PC-3 (cell line): ENCODE measurements at regions of chr13 and their contacts with region 1.

Region 1: DNA sequence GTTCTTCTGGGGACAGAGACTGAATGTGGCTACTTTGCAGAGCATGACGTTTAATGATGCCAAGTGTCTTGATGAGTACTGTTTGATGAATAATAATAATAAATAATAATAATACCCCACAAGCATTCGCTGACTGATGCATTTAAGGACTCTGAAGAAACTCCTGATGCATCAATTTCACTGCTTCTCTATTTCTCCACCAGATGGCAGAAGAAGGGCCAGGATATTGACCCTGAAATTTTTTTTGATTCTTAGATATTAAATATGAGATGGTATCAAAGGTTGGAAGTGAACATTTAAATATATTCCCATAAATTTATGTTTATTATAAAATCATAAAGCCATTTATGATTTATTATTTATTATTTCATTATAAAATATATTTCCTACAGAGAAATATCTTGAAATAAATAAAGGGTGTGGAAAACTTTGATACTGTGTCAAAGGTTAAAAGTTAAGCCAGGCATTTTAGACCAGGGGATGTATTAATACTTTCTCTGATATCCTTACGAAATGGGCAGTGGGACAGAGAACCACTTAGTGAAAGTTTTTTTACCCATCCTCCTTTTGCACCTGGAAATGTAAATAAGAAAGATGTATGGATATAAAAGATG is 170.9 kb downstream of the LACC1 start:
- DNase-seq: peak; percentile 62
- ATAC-seq: no peak
- H3K4me3 ChIP-seq: no peak overlapping the region
- H3K27ac ChIP-seq: peak overlapping the region; percentile 67
- H3K4me1 ChIP-seq: peaks cover 26% of the 10 kb centered on the region
- H3K27me3 ChIP-seq: no peaks in the 10 kb centered on the region
- CTCF ChIP-seq: peak; percentile 61

Region 2: GRCh38 chr13:43905435-43906031 is 145.0 kb before region 1 on chr13:
- CTCF ChIA-PET with region 1: interaction called, 26 read pairs
- POLR2A ChIA-PET with region 1: no interaction called
- intact Hi-C with region 1: loop called (anchors 1 kb)
- DNase-seq: peak; percentile 80
- ATAC-seq: peak; percentile 59
- H3K4me3 ChIP-seq: no peak overlapping the region
- H3K27ac ChIP-seq: no peak overlapping the region
- H3K4me1 ChIP-seq: peaks cover 20% of the 10 kb centered on the region
- H3K27me3 ChIP-seq: no peaks in the 10 kb centered on the region
- CTCF ChIP-seq: peak; percentile 76

Region 3: DNA sequence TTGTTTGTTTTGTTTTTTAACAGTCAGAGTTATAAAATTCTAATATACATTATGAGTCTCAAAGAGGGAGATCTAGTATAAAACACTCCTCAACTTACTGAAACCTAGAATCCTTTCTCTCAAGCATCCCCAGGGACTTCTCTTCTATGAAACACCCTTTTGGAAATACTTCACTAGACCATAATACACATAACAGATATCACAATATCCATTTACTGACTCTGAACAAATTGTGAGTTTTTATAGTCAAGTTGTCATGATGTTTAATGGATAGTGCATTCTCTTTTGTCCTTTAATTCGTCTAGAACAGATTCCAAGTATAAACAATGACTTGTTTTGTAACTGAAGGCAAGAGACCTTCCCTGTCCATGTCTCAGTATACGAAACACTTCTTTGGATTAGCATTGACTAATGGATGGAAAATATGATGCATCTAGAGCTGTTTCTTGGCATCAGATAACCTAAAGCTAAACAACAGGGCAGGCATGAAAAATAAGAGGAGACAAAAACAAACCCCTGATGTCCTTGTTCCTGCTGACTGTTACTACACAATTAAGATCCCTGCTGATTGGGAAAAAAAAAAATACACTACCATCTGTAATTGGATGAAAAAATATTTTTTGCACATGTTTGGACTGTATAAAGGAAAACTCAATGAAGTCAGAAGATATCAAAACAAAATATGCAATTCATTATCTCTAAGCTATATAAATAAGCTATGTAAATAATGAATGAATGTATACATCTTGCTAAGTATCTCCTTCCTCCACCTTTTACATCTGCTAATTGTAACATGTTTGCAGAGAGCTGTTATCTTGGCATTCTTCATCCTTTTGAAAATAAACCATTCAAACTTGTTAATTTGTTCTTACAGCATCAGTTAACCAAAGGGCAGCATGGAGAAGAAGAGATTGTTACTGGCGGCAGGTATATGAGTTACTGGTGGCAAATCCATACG is 43.3 kb after region 1 on chr13:
- CTCF ChIA-PET with region 1: no interaction called
- POLR2A ChIA-PET with region 1: interaction called, 11 read pairs
- intact Hi-C with region 1: no loop called
- DNase-seq: no peak
- ATAC-seq: no peak
- H3K4me3 ChIP-seq: no peak overlapping the region
- H3K27ac ChIP-seq: no peak overlapping the region
- H3K4me1 ChIP-seq: no peaks in the 10 kb centered on the region
- H3K27me3 ChIP-seq: no peaks in the 10 kb centered on the region
- CTCF ChIP-seq: no peak

Region 4: GRCh38 chr13:44141725-44142539 is 91.4 kb after region 1 on chr13:
- CTCF ChIA-PET with region 1: no interaction called
- POLR2A ChIA-PET with region 1: no interaction called
- intact Hi-C with region 1: loop called (anchors 5 kb)
- DNase-seq: peak; percentile 93
- ATAC-seq: peak; percentile 95
- H3K4me3 ChIP-seq: peak overlapping the region; percentile 75
- H3K27ac ChIP-seq: peak overlapping the region; percentile 84
- H3K4me1 ChIP-seq: peaks cover 29% of the 10 kb centered on the region
- H3K27me3 ChIP-seq: no peaks in the 10 kb centered on the region
- CTCF ChIP-seq: no peak

Region 5: GRCh38 chr13:44312898-44313551 is 262.5 kb after region 1 on chr13:
- CTCF ChIA-PET with region 1: no interaction called
- POLR2A ChIA-PET with region 1: no interaction called
- intact Hi-C with region 1: loop called (anchors 2 kb)
- DNase-seq: peak; percentile 91
- ATAC-seq: peak; percentile 60
- H3K4me3 ChIP-seq: peak overlapping the region; percentile 43; the same call in 1 of the 2 replicates
- H3K27ac ChIP-seq: peak overlapping the region; percentile 100
- H3K4me1 ChIP-seq: peaks cover 72% of the 10 kb centered on the region
- H3K27me3 ChIP-seq: no peaks in the 10 kb centered on the region
- CTCF ChIP-seq: no peak

Region 6: DNA sequence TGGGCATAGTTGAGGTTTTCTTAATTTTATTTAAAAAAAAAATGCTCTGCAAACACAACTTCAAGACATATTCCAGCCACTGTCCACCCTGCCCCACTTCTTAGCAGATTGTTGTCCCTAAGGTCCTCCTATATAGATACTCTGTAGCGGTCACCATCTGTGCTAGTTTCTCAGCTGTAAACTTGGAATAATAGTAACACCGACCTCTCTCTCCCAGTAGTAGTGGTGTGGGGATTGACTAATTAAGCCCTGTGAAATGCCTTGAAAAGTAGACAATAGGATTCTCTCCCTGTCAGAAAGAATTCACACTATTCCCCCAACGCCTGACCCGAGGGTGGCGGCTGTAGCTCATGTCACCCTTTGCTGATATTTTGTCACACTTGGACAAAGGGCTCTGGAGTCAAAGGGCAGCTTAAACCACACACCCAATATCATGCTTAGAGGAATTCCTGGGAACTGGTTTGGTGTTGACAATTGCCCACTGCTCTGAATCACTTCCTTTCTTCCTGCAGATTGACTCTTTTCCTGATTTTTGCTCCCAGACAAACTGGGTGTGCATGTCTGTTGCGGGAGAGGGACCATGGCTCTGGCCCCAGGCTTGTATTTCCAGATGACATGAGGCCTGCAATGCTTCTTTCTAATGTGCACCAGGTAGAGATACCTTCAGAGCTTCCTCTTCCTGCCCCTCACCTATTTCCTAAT is 313.9 kb after region 1 on chr13:
- CTCF ChIA-PET with region 1: no interaction called
- POLR2A ChIA-PET with region 1: no interaction called
- intact Hi-C with region 1: loop called (anchors 5 kb)
- DNase-seq: peak; percentile 91
- ATAC-seq: peak; percentile 74
- H3K4me3 ChIP-seq: no peak overlapping the region
- H3K27ac ChIP-seq: peak overlapping the region; percentile 95
- H3K4me1 ChIP-seq: peaks cover 70% of the 10 kb centered on the region
- H3K27me3 ChIP-seq: no peaks in the 10 kb centered on the region
- CTCF ChIP-seq: no peak